Naive thymus-derived CD4-positive, alpha-beta T cell (primary cell): ENCODE measurements at regions of chr19 and their contacts with region 1.

Region 1: GRCh38 chr19:8513687-8514504 is at the start of gene ZNF414:
- DNase-seq: peak; percentile 93 to 100 (median 98)
- ATAC-seq: peak; percentile 88
- H3K4me3 ChIP-seq: peak within 1 kb of the TSS; percentile 73
- H3K4me3 Mint-ChIP-seq: peak within 1 kb of the TSS; percentile 89 to 97 (median 92)
- H3K27ac ChIP-seq: peak within 1 kb of the TSS; percentile 98
- H3K27ac Mint-ChIP-seq: peak within 1 kb of the TSS; percentile 91 to 100 (median 99)
- H3K4me1 ChIP-seq: peaks cover 52 to 63% of the 10 kb centered on the region in 2 donors
- H3K4me1 Mint-ChIP-seq: peaks cover 32 to 64% (median 47%) of the 10 kb centered on the region in 7 donors
- H3K27me3 ChIP-seq: no peaks in the 10 kb centered on the region
- H3K27me3 Mint-ChIP-seq: no peaks in the 10 kb centered on the region
- total RNA-seq, gene ZNF414: 36.0 to 69.2 (median 60.8) TPM

Region 2: DNA sequence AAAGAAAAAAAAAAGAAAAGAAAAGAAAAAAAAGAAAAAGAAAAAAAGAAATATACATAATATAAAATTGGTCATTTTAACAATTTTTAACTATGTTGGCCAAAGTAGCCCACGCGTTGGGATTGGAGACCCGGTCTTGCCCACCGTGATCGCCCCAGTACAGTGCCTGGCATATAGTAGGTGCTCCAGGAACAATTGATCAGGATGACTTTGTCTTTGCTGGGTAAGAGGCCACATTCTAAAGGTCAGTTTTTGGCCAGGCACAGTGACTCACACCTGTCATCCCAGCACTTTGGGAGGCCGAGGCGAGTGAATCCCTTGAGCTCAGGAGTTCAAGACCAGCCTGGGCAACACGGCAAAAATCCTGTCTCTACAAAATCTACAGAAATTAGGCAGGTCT is 153.7 kb before region 1 on chr19:
- CTCF ChIA-PET with region 1: no interaction called
- POLR2A ChIA-PET with region 1: no interaction called
- intact Hi-C with region 1: no loop called
- DNase-seq: no peak
- ATAC-seq: no peak
- H3K4me3 ChIP-seq: no peak overlapping the region
- H3K4me3 Mint-ChIP-seq: no peak overlapping the region
- H3K27ac ChIP-seq: no peak overlapping the region
- H3K27ac Mint-ChIP-seq: no peak overlapping the region
- H3K4me1 ChIP-seq: no peaks in the 10 kb centered on the region
- H3K4me1 Mint-ChIP-seq: peaks cover 7 to 23% (median 10%) of the 10 kb centered on the region in 7 donors
- H3K27me3 ChIP-seq: peaks cover 0 to 4% of the 10 kb centered on the region in 2 donors
- H3K27me3 Mint-ChIP-seq: peaks cover 4 to 25% (median 14%) of the 10 kb centered on the region in 5 donors

Region 3: GRCh38 chr19:8389891-8390616 is 123.8 kb before region 1 on chr19 and contains the start of gene RAB11B:
- CTCF ChIA-PET with region 1: no interaction called
- POLR2A ChIA-PET with region 1: interaction called, 7 read pairs
- intact Hi-C with region 1: loop called (anchors 1 kb)
- DNase-seq: peak; percentile 81 to 99 (median 98)
- ATAC-seq: peak; percentile 93
- H3K4me3 ChIP-seq: peak within 1 kb of the TSS; percentile 87
- H3K4me3 Mint-ChIP-seq: peak within 1 kb of the TSS; percentile 87 to 98 (median 92)
- H3K27ac ChIP-seq: peak within 1 kb of the TSS; percentile 98
- H3K27ac Mint-ChIP-seq: peak within 1 kb of the TSS; percentile 82 to 98 (median 93)
- H3K4me1 ChIP-seq: peaks cover 4 to 8% of the 10 kb centered on the region in 2 donors
- H3K4me1 Mint-ChIP-seq: peaks cover 18 to 36% (median 28%) of the 10 kb centered on the region in 7 donors
- H3K27me3 ChIP-seq: no peaks in the 10 kb centered on the region
- H3K27me3 Mint-ChIP-seq: no peaks in the 10 kb centered on the region
- total RNA-seq, gene RAB11B: 77.4 to 113 (median 103) TPM

Region 4: GRCh38 chr19:8476524-8476923 is 37.4 kb before region 1 on chr19:
- CTCF ChIA-PET with region 1: interaction called, 4 read pairs
- POLR2A ChIA-PET with region 1: interaction called, 5 read pairs
- intact Hi-C with region 1: loop called in 1 of 2 experiments (anchors 5 kb)
- DNase-seq: no peak
- ATAC-seq: no peak
- H3K4me3 ChIP-seq: no peak overlapping the region
- H3K4me3 Mint-ChIP-seq: peak overlapping the region in 3 of 10 donors; percentile 2 to 32 (median 27)
- H3K27ac ChIP-seq: no peak overlapping the region
- H3K27ac Mint-ChIP-seq: peak overlapping the region in 5 of 9 donors; percentile 54 to 86 (median 75)
- H3K4me1 ChIP-seq: peaks cover 8 to 9% of the 10 kb centered on the region in 2 donors
- H3K4me1 Mint-ChIP-seq: peaks cover 33 to 70% (median 62%) of the 10 kb centered on the region in 7 donors
- H3K27me3 ChIP-seq: no peaks in the 10 kb centered on the region
- H3K27me3 Mint-ChIP-seq: no peaks in the 10 kb centered on the region

Region 5: DNA sequence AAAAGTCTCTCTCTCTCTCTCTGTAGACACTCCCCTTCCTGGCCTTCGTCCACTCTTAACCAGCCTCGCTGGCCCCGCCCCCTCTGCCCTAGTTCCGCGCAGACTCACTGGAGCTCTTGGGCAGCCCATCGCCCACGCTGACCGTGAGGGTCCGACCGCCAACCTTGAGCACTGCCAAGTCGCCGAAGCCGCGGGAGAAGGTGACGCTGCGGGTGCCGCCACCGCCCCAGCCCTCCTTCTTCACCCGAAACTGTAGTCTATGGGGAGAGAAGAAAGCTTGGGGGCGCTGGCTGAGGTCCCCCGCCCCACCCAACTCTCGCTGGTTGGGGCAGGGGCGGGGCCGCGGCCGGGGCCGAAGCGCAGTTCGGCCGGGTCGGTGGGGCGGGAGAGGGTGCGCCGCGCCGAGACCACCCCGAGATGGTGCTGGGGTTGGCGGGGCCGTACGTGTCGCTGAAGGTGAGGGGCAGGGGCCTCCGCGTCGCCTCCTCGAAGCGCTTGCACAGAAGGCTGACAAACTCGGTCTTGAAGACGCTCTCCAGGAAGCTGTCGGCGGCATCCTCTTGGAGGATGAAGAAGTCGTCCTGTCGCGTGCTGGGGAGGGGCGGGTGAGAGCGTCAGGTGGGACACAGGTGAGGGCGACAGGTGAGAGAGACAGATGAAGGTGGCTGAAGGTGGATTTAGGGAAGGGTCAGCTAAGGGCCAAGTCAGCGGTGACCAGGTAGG is 12.6 kb after region 1 on chr19:
- CTCF ChIA-PET with region 1: interaction called, 3 read pairs
- POLR2A ChIA-PET with region 1: interaction called, 31 read pairs
- intact Hi-C with region 1: no loop called
- DNase-seq: no peak
- ATAC-seq: no peak
- H3K4me3 ChIP-seq: no peak overlapping the region
- H3K4me3 Mint-ChIP-seq: peak overlapping the region in 1 of 10 donors; percentile 47
- H3K27ac ChIP-seq: no peak overlapping the region
- H3K27ac Mint-ChIP-seq: peak overlapping the region in 6 of 9 donors; percentile 19 to 77 (median 58)
- H3K4me1 ChIP-seq: peaks cover 0 to 11% of the 10 kb centered on the region in 2 donors
- H3K4me1 Mint-ChIP-seq: peaks cover 9 to 26% (median 23%) of the 10 kb centered on the region in 7 donors
- H3K27me3 ChIP-seq: no peaks in the 10 kb centered on the region
- H3K27me3 Mint-ChIP-seq: no peaks in the 10 kb centered on the region

Region 6: DNA sequence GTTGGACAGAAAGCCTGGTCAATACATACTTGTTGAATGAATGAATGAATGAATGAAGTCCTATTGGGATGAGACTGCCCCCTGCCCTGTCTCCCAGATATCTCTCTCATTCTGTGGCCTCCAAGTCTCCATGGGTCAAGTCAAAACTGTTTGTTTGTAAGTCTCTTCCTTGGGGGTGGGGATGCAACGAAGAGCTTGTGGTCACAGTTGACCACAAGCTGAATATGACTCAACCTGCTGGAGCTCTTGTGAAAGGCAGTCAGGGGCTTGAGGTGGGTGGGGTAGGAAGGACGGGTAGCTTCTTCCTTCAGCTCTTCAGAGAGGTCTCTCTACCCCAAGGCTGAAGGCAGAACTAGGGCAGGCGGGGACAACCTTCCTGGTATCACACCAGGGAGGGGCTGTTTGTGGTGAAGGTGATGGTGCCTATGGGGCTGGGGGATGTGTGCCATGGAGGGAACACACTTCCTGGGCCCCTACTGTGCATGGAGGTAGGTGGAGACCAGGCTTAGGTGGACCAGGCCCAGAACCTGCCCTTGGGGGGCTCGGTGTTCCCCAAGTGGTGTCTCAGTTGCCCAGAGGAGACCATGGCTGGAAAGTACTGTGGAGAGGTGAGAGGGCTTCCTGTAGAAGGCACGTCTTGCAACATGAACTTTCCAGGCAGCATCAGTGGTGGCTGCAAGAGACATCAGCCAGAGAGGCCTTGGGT is 55.3 kb after region 1 on chr19:
- CTCF ChIA-PET with region 1: interaction called, 14 read pairs
- POLR2A ChIA-PET with region 1: interaction called, 566 read pairs
- intact Hi-C with region 1: loop called in 1 of 2 experiments (anchors 1 kb)
- DNase-seq: peak in 3 of 9 donors; percentile 19 to 71 (median 36)
- ATAC-seq: peak; percentile 76
- H3K4me3 ChIP-seq: peak overlapping the region; percentile 44
- H3K4me3 Mint-ChIP-seq: peak overlapping the region; percentile 66 to 88 (median 74)
- H3K27ac ChIP-seq: peak overlapping the region; percentile 59
- H3K27ac Mint-ChIP-seq: peak overlapping the region; percentile 88 to 98 (median 92)
- H3K4me1 ChIP-seq: peaks cover 46 to 72% of the 10 kb centered on the region in 2 donors
- H3K4me1 Mint-ChIP-seq: peaks cover 32 to 80% (median 64%) of the 10 kb centered on the region in 7 donors
- H3K27me3 ChIP-seq: no peaks in the 10 kb centered on the region
- H3K27me3 Mint-ChIP-seq: peaks cover 0 to 2% (median 0%) of the 10 kb centered on the region in 5 donors